Activated T-helper 2 cell treated with anti-CD3 and anti-CD28 coated beads, Interferon-gamma antibody, Interleukin-2, Interleukin-4, amounts not matched to agents 10 μg/mL and 5 μg/mL and 100 μg/mL, durations not matched to agents 14 hours and 24 hours and 36 hours (primary cell): ENCODE measurements at regions of chr15 and their contacts with region 1.

Region 1: GRCh38 chr15:75130597-75131268 is 70.9 kb upstream of the C15orf39 start:
- DNase-seq: no peak
- H3K4me3 Mint-ChIP-seq: peak overlapping the region; percentile 58
- H3K27ac Mint-ChIP-seq: peak overlapping the region; percentile 69
- H3K4me1 Mint-ChIP-seq: peaks cover 31% of the 10 kb centered on the region
- H3K27me3 Mint-ChIP-seq: no peaks in the 10 kb centered on the region

Region 2: DNA sequence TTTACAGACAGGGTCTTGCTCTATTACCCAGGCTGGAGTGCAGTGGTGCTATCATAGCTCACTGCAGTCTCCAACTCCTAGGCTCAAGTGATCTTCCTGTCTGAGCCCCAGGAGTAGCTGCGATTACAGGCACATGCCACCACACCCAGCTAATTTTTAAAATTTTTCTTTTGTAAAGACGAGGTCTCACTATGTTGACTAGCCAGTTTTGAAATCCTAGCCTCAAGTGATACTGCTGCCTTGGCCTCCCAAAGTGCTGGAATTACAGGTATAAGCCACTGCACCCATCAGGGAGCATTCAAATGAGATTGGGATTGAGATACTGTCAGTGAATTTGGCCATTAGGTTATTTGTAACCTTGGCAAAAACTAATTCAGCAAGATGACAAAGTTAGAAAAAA is 456.6 kb before region 1 on chr15:
- intact Hi-C with region 1: no loop called
- DNase-seq: no peak
- H3K4me3 Mint-ChIP-seq: no peak overlapping the region
- H3K27ac Mint-ChIP-seq: no peak overlapping the region
- H3K4me1 Mint-ChIP-seq: no peaks in the 10 kb centered on the region
- H3K27me3 Mint-ChIP-seq: no peaks in the 10 kb centered on the region

Region 3: DNA sequence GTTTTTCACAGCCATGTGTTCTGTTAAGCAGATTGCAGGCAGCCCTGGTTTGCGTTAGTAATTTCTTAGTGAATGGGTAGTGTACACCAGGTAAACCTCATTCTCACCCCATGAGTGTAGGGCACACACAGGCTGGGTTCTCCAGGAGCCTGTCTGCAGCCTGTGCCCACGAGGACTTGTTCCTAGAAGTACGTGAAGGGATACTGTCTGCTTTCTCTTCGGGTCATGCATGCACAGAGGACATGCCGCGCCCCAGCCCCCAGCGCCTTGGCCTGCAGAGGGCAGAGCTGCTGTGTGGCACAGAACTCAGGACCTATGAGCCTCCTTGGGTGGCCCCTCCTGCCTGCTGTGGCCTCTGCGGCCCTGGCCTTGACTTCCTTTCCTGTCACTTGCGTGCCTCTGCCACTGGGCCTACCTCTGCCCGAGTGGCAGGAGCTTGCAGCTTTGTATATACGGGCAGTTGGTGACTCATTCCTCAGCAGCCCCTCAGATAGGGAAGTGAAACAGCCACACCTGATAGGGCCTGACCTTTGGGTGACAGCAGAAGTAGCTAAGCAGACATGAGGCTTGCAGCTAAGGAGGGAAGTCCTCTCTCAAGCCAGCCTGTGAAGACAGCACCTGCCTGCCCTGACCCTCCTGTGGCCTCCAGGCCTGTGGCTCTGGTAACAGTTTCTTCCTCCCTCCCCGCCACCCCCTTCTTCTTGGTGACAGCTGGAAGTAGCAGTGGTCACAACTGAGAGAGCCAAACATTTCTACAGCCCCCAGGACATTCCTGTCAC is 87.8 kb before region 1 on chr15:
- intact Hi-C with region 1: loop called (anchors 1 kb)
- DNase-seq: peak; percentile 81
- H3K4me3 Mint-ChIP-seq: peak overlapping the region; percentile 74
- H3K27ac Mint-ChIP-seq: peak overlapping the region; percentile 73
- H3K4me1 Mint-ChIP-seq: peaks cover 87% of the 10 kb centered on the region
- H3K27me3 Mint-ChIP-seq: no peaks in the 10 kb centered on the region

Region 4: GRCh38 chr15:75067123-75067830 is 63.5 kb before region 1 on chr15:
- intact Hi-C with region 1: loop called (anchors 2 kb)
- DNase-seq: peak; percentile 72
- H3K4me3 Mint-ChIP-seq: peak overlapping the region; percentile 70
- H3K27ac Mint-ChIP-seq: peak overlapping the region; percentile 97
- H3K4me1 Mint-ChIP-seq: peaks cover 79% of the 10 kb centered on the region
- H3K27me3 Mint-ChIP-seq: no peaks in the 10 kb centered on the region

Region 5: DNA sequence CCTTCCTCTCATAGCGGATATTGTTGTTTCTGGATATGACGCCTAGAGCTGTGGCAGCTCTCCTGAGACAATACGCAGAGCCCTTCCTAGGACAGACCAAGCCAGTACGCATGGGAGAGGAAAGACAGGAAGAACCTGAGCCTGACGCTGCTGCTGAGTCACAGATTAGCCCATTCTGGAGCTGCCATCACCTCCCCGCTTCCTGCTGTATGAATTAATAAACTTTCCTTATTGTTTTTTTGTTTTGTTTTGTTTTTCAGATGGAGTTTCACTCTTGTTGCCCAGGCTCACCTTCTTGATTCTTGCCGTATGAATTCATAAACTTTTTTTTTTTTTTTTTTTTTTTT is 40.4 kb before region 1 on chr15:
- intact Hi-C with region 1: loop called (anchors 5 kb)
- DNase-seq: no peak
- H3K4me3 Mint-ChIP-seq: no peak overlapping the region
- H3K27ac Mint-ChIP-seq: no peak overlapping the region
- H3K4me1 Mint-ChIP-seq: peaks cover 13% of the 10 kb centered on the region
- H3K27me3 Mint-ChIP-seq: peaks cover 1% of the 10 kb centered on the region

Region 6: GRCh38 chr15:75104804-75105535 is 25.8 kb before region 1 on chr15:
- intact Hi-C with region 1: loop called (anchors 1 kb)
- DNase-seq: peak; percentile 59
- H3K4me3 Mint-ChIP-seq: no peak overlapping the region
- H3K27ac Mint-ChIP-seq: peak overlapping the region; percentile 84
- H3K4me1 Mint-ChIP-seq: peaks cover 43% of the 10 kb centered on the region
- H3K27me3 Mint-ChIP-seq: no peaks in the 10 kb centered on the region

Region 7: DNA sequence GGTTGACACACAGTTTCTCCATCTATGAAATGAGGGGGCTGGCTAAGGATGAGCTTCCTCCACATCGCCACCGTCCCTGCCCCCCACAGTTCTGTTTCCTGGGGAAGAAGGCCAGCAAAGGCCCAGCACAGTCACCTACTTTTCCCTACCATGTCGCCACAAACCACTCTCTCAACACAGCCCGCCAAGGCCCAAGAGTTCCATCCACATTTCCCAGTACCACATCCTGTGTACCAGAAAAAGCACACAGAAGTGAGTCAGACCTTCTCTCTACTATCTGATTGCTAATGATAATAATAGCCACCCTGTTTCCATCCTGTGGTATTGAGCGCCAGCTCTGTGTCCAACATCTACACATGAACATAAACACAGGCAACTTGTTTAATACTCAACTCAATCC is 40.7 kb after region 1 on chr15:
- intact Hi-C with region 1: loop called (anchors 2 kb)
- DNase-seq: peak; percentile 55
- H3K4me3 Mint-ChIP-seq: peak overlapping the region; percentile 1
- H3K27ac Mint-ChIP-seq: peak overlapping the region; percentile 72
- H3K4me1 Mint-ChIP-seq: peaks cover 60% of the 10 kb centered on the region
- H3K27me3 Mint-ChIP-seq: no peaks in the 10 kb centered on the region